Transverse colon (tissue), 4 donors: ENCODE measurements at regions of chr14 and their contacts with region 1.

Region 1: GRCh38 chr14:22472935-22473854 is 115.8 kb downstream of the DAD1 start:
- DNase-seq: peak; percentile 56
- H3K4me3 ChIP-seq: no peak overlapping the region
- H3K27ac ChIP-seq: no peak overlapping the region
- H3K4me1 ChIP-seq: peaks cover 0 to 5% (median 0%) of the 10 kb centered on the region in 4 donors
- H3K27me3 ChIP-seq: no peaks in the 10 kb centered on the region
- CTCF ChIP-seq: peak; percentile 42 to 65 (median 58)
- EP300 ChIP-seq: no peak
- POLR2A ChIP-seq: no peak

Region 2: GRCh38 chr14:21160061-21160603 is 1313.1 kb before region 1 on chr14:
- in situ Hi-C with region 1: no loop called
- intact Hi-C with region 1: no loop called
- DNase-seq: no peak
- H3K4me3 ChIP-seq: no peak overlapping the region
- H3K27ac ChIP-seq: no peak overlapping the region
- H3K4me1 ChIP-seq: no peaks in the 10 kb centered on the region
- H3K27me3 ChIP-seq: peaks cover 3% of the 10 kb centered on the region
- CTCF ChIP-seq: no peak
- EP300 ChIP-seq: no peak
- POLR2A ChIP-seq: no peak

Region 3: DNA sequence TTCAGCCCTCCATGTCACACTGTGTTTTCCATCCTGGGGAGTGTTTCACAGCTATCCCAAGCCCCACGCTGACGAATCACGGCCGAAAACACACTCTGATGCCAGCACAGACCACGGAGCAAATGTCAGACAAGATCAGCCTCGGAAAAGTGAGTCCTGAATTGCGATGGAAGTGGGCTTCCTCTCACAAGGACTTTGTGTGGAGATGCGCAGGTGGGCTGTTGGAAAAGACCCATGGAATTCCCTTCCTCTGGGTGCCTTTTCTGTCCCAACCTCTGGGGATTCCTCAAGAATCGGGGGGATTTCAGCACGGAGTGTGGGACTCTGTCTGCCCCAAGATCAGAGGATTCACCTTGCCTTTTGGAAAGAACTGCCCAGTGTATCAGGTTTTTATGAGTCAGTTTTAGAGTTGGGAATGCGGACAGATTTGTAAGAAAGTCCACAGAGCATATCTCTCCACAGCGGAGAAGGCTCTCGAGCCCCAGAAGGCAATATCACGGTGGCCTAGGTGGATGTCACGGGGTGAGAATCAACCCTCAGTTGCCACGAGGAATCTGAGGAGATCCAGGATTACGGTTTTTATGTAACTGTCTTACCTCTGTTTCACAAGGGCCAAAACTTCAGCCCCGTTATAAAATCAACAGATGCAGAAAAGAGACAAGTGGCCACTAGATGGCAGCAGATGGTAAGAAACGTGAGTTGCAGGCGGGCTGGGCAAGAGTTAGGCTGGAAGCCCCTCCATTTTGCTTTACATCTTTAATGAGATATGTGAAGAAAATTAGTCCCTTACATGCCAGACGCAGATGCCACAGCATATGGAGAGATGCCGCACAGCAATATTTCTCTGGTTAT is 86.0 kb before region 1 on chr14:
- in situ Hi-C with region 1: loop called (anchors 5 to 10 kb)
- intact Hi-C with region 1: loop called (anchors 5 kb)
- DNase-seq: peak; percentile 67
- H3K4me3 ChIP-seq: no peak overlapping the region
- H3K27ac ChIP-seq: no peak overlapping the region
- H3K4me1 ChIP-seq: peaks cover 0 to 17% (median 5%) of the 10 kb centered on the region in 4 donors
- H3K27me3 ChIP-seq: peaks cover 5% of the 10 kb centered on the region
- CTCF ChIP-seq: peak; percentile 72 to 87 (median 78)
- EP300 ChIP-seq: no peak
- POLR2A ChIP-seq: no peak